Spleen (tissue), 13 donors: ENCODE measurements at regions of chr13 and their contacts with region 1.

Region 1: DNA sequence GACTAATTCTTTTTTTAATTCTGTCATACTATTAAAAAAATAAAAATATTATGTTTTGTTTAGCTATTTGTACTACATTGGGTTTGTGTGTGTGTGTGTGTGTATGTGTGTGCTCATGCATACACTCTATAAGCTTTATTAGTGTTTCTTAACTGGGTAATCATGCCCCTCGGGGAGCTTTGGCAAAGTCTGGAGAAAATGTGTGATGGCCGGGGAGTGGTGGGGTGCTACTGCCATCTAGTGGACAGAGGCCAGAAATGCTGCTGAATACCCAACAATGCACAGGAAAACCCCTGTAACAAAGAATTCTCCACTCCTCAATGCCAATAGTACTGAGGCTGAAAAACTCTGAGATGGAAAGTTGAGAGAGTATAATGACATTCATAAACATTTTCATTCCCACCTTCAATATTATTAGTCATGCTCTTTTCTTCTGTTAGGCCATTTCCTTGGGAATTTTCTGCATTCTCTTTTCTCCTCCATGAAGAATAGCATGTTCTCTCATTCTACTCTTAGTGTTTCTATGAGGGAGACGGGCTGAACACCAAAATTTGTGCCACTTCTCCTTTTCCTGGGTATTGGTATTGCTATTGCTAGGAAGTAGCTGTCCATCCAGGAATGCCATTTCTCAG is 157.3 kb downstream of the DNAJC3 start:
- DNase-seq: peak; percentile 84
- H3K4me3 ChIP-seq: no peak overlapping the region
- H3K27ac ChIP-seq: no peak overlapping the region
- H3K4me1 ChIP-seq: peaks cover 0 to 8% (median 5%) of the 10 kb centered on the region in 6 donors
- H3K27me3 ChIP-seq: no peaks in the 10 kb centered on the region
- CTCF ChIP-seq: peak; percentile 83 to 91 (median 88)
- POLR2A ChIP-seq: no peak

Region 2: GRCh38 chr13:94705081-94705751 is 1129.0 kb before region 1 on chr13:
- intact Hi-C with region 1: no loop called
- DNase-seq: no peak
- H3K4me3 ChIP-seq: no peak overlapping the region
- H3K27ac ChIP-seq: no peak overlapping the region
- H3K4me1 ChIP-seq: peaks cover 0 to 23% (median 13%) of the 10 kb centered on the region in 6 donors
- H3K27me3 ChIP-seq: peaks cover 6 to 100% (median 100%) of the 10 kb centered on the region in 7 donors
- CTCF ChIP-seq: no peak
- POLR2A ChIP-seq: no peak

Region 3: GRCh38 chr13:95497381-95497807 is 336.9 kb before region 1 on chr13:
- intact Hi-C with region 1: loop called (anchors 5 kb)
- DNase-seq: no peak
- H3K4me3 ChIP-seq: no peak overlapping the region
- H3K27ac ChIP-seq: no peak overlapping the region
- H3K4me1 ChIP-seq: peaks cover 0 to 7% (median 2%) of the 10 kb centered on the region in 6 donors
- H3K27me3 ChIP-seq: peaks cover 0 to 12% (median 0%) of the 10 kb centered on the region in 7 donors
- CTCF ChIP-seq: no peak
- POLR2A ChIP-seq: no peak

Region 4: DNA sequence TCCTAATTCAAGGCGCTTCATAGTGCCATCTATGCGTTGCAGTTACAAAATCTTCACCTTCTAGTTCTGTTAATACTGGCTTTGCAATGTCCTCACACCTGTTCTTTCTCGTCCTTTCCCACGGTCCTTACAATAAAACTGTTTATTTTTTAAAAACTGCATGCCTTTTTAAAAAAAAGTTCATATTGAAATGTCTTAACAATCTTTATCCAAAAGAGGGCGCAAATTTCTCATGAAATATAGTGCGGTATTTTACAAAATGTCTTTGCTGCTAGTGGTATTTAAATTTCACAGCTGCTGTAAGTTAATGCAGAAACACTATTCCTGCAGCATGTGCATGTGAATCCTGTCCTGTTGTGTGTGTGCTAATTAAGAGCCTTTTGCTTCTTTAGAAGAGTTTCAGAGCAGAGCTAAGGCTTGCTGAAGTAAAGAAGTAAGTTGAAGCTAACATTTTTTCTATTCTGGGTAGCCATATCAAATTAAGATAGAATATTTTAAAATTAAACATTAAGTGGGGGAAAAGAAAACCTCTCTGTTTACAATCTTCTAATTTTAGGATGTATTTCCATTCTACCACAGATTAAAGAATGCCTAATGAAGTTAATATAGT is 297.5 kb before region 1 on chr13:
- intact Hi-C with region 1: loop called (anchors 10 kb)
- DNase-seq: no peak
- H3K4me3 ChIP-seq: no peak overlapping the region
- H3K27ac ChIP-seq: no peak overlapping the region
- H3K4me1 ChIP-seq: no peaks in the 10 kb centered on the region
- H3K27me3 ChIP-seq: peaks cover 0 to 20% (median 0%) of the 10 kb centered on the region in 7 donors
- CTCF ChIP-seq: peak in 4 of 11 experiments; percentile 26 to 37 (median 32)
- POLR2A ChIP-seq: no peak

Region 5: GRCh38 chr13:95624020-95624419 is 210.2 kb before region 1 on chr13:
- intact Hi-C with region 1: loop called (anchors 2 kb)
- DNase-seq: no peak
- H3K4me3 ChIP-seq: no peak overlapping the region
- H3K27ac ChIP-seq: no peak overlapping the region
- H3K4me1 ChIP-seq: no peaks in the 10 kb centered on the region
- H3K27me3 ChIP-seq: peaks cover 0 to 7% (median 0%) of the 10 kb centered on the region in 7 donors
- CTCF ChIP-seq: peak in 8 of 11 experiments; percentile 21 to 63 (median 48)
- POLR2A ChIP-seq: no peak

Region 6: DNA sequence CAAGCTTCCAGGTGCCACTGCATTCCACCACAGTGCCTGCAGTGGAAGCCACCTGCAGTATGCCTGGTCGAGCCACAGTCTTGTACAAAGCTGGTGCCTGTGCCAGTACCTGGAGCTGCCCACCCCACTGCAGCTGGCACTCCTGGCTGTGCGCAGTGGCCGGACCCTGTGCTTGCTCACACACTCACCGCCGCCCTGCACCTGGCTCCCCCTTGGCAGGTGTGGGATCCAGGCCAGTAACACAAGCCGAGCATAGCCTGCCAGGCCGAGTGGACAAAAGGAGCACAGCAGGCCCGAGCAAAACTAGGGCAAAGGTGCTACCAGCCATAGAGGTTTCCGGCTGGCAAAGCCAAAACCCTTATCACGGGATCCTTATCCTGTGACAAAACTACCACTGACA is 200.4 kb after region 1 on chr13:
- intact Hi-C with region 1: no loop called
- DNase-seq: peak; percentile 73
- H3K4me3 ChIP-seq: no peak overlapping the region
- H3K27ac ChIP-seq: no peak overlapping the region
- H3K4me1 ChIP-seq: no peaks in the 10 kb centered on the region
- H3K27me3 ChIP-seq: no peaks in the 10 kb centered on the region
- CTCF ChIP-seq: no peak
- POLR2A ChIP-seq: no peak

Region 7: DNA sequence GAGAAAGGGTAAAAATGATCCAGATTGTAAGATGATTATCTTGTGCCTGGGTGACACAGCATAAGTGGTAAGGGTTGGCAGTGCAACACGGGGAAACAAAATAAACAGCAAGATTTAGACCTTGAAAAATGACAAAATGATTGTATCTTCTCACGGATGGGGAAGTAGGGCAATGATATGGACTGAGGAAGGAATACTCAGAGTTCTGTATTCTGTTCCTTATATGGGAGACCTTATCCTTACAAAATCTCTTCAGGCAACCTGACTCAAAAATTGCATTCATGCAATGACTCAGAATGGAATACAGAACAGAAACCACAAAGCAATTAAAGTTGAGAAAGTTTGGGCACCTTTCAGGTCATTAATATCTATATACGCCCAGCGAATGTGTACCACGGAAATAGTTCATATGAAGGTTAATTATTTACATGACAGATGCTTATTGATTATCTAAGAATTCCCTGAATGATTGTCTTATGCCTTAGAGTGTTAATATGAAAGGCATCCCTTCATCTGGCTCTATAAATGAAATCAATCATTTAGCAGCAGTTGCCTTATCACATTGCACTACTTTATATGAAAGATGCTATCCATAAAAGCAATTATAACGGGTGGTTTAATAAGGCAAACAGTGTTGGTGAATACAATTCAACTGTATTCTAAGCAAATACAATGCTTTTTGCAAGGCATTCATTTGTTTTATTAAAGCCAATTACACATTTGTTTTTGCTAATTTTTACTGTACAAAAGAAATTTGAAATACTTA is 404.8 kb after region 1 on chr13:
- intact Hi-C with region 1: no loop called
- DNase-seq: no peak
- H3K4me3 ChIP-seq: no peak overlapping the region
- H3K27ac ChIP-seq: no peak overlapping the region
- H3K4me1 ChIP-seq: no peaks in the 10 kb centered on the region
- H3K27me3 ChIP-seq: no peaks in the 10 kb centered on the region
- CTCF ChIP-seq: no peak
- POLR2A ChIP-seq: no peak